Caco-2 (cell line): ENCODE measurements at regions of chr3 and their contacts with region 1.

Region 1: GRCh38 chr3:111735271-111735758 is 123.8 kb upstream of the PHLDB2 start:
- DNase-seq: peak; percentile 84 to 85
- H3K4me3 ChIP-seq: no peak overlapping the region
- H3K4me3 Mint-ChIP-seq: peak overlapping the region; percentile 79
- H3K27ac Mint-ChIP-seq: peak overlapping the region; percentile 78
- H3K4me1 ChIP-seq: peaks cover 57% of the 10 kb centered on the region
- H3K4me1 Mint-ChIP-seq: peaks cover 51% of the 10 kb centered on the region
- H3K27me3 ChIP-seq: no peaks in the 10 kb centered on the region
- H3K27me3 Mint-ChIP-seq: no peaks in the 10 kb centered on the region
- CTCF ChIP-seq: no peak

Region 2: DNA sequence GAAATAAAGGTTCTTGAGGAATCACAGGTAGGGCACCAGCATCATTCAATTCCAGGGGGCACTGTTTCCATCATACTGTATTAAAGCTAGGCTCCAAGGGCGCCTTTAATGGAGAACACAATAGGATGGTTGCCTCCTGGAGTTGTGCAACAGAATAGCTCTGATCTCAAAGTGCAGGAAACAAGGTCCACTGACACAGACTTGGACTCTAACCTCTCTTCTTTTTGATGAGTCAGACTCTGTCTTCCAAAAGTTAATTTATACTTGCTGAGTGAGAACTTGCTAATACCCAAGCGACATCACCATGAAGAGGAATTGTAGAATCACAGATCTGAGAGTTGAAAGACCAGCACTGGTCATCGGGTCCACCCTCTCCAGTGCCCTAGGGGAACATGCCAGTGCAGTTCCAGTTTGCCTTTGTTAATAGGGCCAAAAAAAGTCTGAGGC is 29.4 kb after region 1 on chr3:
- CTCF ChIA-PET with region 1: no interaction called
- POLR2A ChIA-PET with region 1: no interaction called
- intact Hi-C with region 1: loop called (anchors 2 kb)
- DNase-seq: peak in 1 of 2 experiments; percentile 26
- H3K4me3 ChIP-seq: no peak overlapping the region
- H3K4me3 Mint-ChIP-seq: no peak overlapping the region
- H3K27ac Mint-ChIP-seq: no peak overlapping the region
- H3K4me1 ChIP-seq: peaks cover 45% of the 10 kb centered on the region
- H3K4me1 Mint-ChIP-seq: peaks cover 45% of the 10 kb centered on the region
- H3K27me3 ChIP-seq: no peaks in the 10 kb centered on the region
- H3K27me3 Mint-ChIP-seq: no peaks in the 10 kb centered on the region
- CTCF ChIP-seq: no peak

Region 3: GRCh38 chr3:111786922-111787321 is 51.6 kb after region 1 on chr3:
- CTCF ChIA-PET with region 1: no interaction called
- POLR2A ChIA-PET with region 1: interaction called, 3 read pairs
- intact Hi-C with region 1: loop called (anchors 1 kb)
- DNase-seq: no peak
- H3K4me3 ChIP-seq: no peak overlapping the region
- H3K4me3 Mint-ChIP-seq: no peak overlapping the region
- H3K27ac Mint-ChIP-seq: no peak overlapping the region
- H3K4me1 ChIP-seq: peaks cover 52% of the 10 kb centered on the region
- H3K4me1 Mint-ChIP-seq: peaks cover 19% of the 10 kb centered on the region
- H3K27me3 ChIP-seq: no peaks in the 10 kb centered on the region
- H3K27me3 Mint-ChIP-seq: no peaks in the 10 kb centered on the region
- CTCF ChIP-seq: no peak

Region 4: DNA sequence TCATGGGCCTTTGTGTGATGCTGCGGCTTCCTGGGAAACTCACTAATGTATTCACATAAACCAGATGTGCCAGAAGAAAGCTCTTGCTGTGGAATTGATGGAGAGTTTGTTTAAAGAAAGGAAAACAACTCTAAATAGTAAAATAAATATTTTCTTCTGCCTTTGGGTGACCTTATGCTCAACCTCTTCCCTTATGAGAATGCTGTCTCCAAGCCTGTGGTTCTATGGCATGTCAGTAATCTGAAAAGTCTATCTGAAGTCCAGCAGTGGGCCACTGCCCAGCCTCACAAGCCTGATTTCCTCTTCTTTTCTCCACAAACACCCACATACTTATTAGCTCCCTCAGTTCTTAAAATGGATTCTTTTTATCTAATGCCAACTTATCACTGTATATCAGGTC is 73.9 kb after region 1 on chr3:
- CTCF ChIA-PET with region 1: no interaction called
- POLR2A ChIA-PET with region 1: no interaction called
- intact Hi-C with region 1: loop called (anchors 5 kb)
- DNase-seq: no peak
- H3K4me3 ChIP-seq: no peak overlapping the region
- H3K4me3 Mint-ChIP-seq: no peak overlapping the region
- H3K27ac Mint-ChIP-seq: no peak overlapping the region
- H3K4me1 ChIP-seq: peaks cover 30% of the 10 kb centered on the region
- H3K4me1 Mint-ChIP-seq: peaks cover 32% of the 10 kb centered on the region
- H3K27me3 ChIP-seq: no peaks in the 10 kb centered on the region
- H3K27me3 Mint-ChIP-seq: no peaks in the 10 kb centered on the region
- CTCF ChIP-seq: no peak

Region 5: GRCh38 chr3:111859974-111860859 is 124.9 kb after region 1 on chr3:
- CTCF ChIA-PET with region 1: interaction called, 8 read pairs
- POLR2A ChIA-PET with region 1: interaction called, 16 read pairs
- intact Hi-C with region 1: loop called (anchors 1 kb)
- DNase-seq: peak; percentile 71 to 73
- H3K4me3 ChIP-seq: peak overlapping the region; percentile 95
- H3K4me3 Mint-ChIP-seq: peak overlapping the region; percentile 93
- H3K27ac Mint-ChIP-seq: peak overlapping the region; percentile 80
- H3K4me1 ChIP-seq: peaks cover 25% of the 10 kb centered on the region
- H3K4me1 Mint-ChIP-seq: peaks cover 47% of the 10 kb centered on the region
- H3K27me3 ChIP-seq: no peaks in the 10 kb centered on the region
- H3K27me3 Mint-ChIP-seq: no peaks in the 10 kb centered on the region
- CTCF ChIP-seq: peak; percentile 26 to 44

Region 6: GRCh38 chr3:112074721-112075497 is 339.6 kb after region 1 on chr3:
- CTCF ChIA-PET with region 1: no interaction called
- POLR2A ChIA-PET with region 1: no interaction called
- intact Hi-C with region 1: loop called (anchors 1 kb)
- DNase-seq: peak; percentile 94 to 96
- H3K4me3 ChIP-seq: peak overlapping the region; percentile 5; the same call in 1 of the 2 replicates
- H3K4me3 Mint-ChIP-seq: peak overlapping the region; percentile 63
- H3K27ac Mint-ChIP-seq: peak overlapping the region; percentile 85
- H3K4me1 ChIP-seq: peaks cover 34% of the 10 kb centered on the region
- H3K4me1 Mint-ChIP-seq: peaks cover 35% of the 10 kb centered on the region
- H3K27me3 ChIP-seq: no peaks in the 10 kb centered on the region
- H3K27me3 Mint-ChIP-seq: no peaks in the 10 kb centered on the region
- CTCF ChIP-seq: no peak

Region 7: GRCh38 chr3:112086076-112086854 is 350.9 kb after region 1 on chr3 and contains the start of gene C3orf52:
- CTCF ChIA-PET with region 1: no interaction called
- POLR2A ChIA-PET with region 1: no interaction called
- intact Hi-C with region 1: loop called (anchors 5 kb)
- DNase-seq: peak; percentile 92 to 95
- H3K4me3 ChIP-seq: peak within 1 kb of the TSS; percentile 74
- H3K4me3 Mint-ChIP-seq: peak within 1 kb of the TSS; percentile 73
- H3K27ac Mint-ChIP-seq: peak within 1 kb of the TSS; percentile 94
- H3K4me1 ChIP-seq: peaks cover 66% of the 10 kb centered on the region
- H3K4me1 Mint-ChIP-seq: peaks cover 56% of the 10 kb centered on the region
- H3K27me3 ChIP-seq: no peaks in the 10 kb centered on the region
- H3K27me3 Mint-ChIP-seq: no peaks in the 10 kb centered on the region
- CTCF ChIP-seq: peak; percentile 21 to 34
- total RNA-seq, gene C3orf52: 52.4 and 64.5 TPM in 2 replicates